Activated CD4-positive, alpha-beta T cell treated with anti-CD3 and anti-CD28 coated beads, Interleukin-2, amount 10 ng/mL, durations not matched to agents 7 days and 5 days (primary cell): ENCODE measurements at regions of chr7 and their contacts with region 1.

Region 1: GRCh38 chr7:39321909-39322498 is 244.2 kb upstream of the YAE1 start:
- DNase-seq: no peak
- H3K4me3 Mint-ChIP-seq: no peak overlapping the region
- H3K27ac Mint-ChIP-seq: no peak overlapping the region
- H3K4me1 Mint-ChIP-seq: no peaks in the 10 kb centered on the region
- H3K27me3 Mint-ChIP-seq: peaks cover 12% of the 10 kb centered on the region

Region 2: DNA sequence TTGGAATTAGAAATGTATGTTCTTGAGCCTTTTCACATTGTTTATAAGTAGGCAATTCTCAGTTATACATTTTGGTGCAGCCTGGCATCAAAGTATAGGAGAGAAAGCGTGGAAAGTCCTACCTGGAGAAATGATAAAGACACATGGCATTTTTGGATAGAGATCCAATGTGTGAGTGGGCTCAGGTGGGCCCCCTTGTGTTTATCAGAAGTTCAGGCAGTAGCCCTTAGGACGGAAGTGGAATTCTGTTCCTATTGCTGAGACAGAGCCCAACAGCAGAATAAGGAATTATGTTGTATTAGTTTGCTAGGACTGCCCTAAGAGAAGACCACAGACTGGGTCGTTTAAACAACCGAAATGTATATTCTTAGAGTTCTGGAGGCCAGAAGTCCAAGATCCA is 605.6 kb before region 1 on chr7:
- CTCF ChIA-PET with region 1: interaction called, 11 read pairs
- POLR2A ChIA-PET with region 1: no interaction called
- DNase-seq: no peak
- H3K4me3 Mint-ChIP-seq: no peak overlapping the region
- H3K27ac Mint-ChIP-seq: no peak overlapping the region
- H3K4me1 Mint-ChIP-seq: no peaks in the 10 kb centered on the region
- H3K27me3 Mint-ChIP-seq: no peaks in the 10 kb centered on the region